Calu3 (cell line): ENCODE measurements at regions of chr7 and their contacts with region 1.

Region 1: GRCh38 chr7:143248761-143249354 is 14.4 kb upstream of the GSTK1 start:
- DNase-seq: peak; percentile 46
- H3K4me3 Mint-ChIP-seq: no peak overlapping the region
- H3K27ac Mint-ChIP-seq: peak overlapping the region; percentile 37
- H3K4me1 Mint-ChIP-seq: peaks cover 54% of the 10 kb centered on the region
- H3K27me3 Mint-ChIP-seq: no peaks in the 10 kb centered on the region
- CTCF ChIP-seq: no peak

Region 2: GRCh38 chr7:141649137-141649864 is 1599.6 kb before region 1 on chr7:
- CTCF ChIA-PET with region 1: no interaction called
- intact Hi-C with region 1: no loop called
- DNase-seq: no peak
- H3K4me3 Mint-ChIP-seq: no peak overlapping the region
- H3K27ac Mint-ChIP-seq: no peak overlapping the region
- H3K4me1 Mint-ChIP-seq: peaks cover 7% of the 10 kb centered on the region
- H3K27me3 Mint-ChIP-seq: no peaks in the 10 kb centered on the region
- CTCF ChIP-seq: no peak

Region 3: GRCh38 chr7:142319970-142320369 is 928.9 kb before region 1 on chr7:
- CTCF ChIA-PET with region 1: no interaction called
- intact Hi-C with region 1: no loop called
- DNase-seq: peak; percentile 40
- H3K4me3 Mint-ChIP-seq: no peak overlapping the region
- H3K27ac Mint-ChIP-seq: no peak overlapping the region
- H3K4me1 Mint-ChIP-seq: no peaks in the 10 kb centered on the region
- H3K27me3 Mint-ChIP-seq: peaks cover 59% of the 10 kb centered on the region
- CTCF ChIP-seq: peak; percentile 45

Region 4: GRCh38 chr7:143085109-143085508 is 163.7 kb before region 1 on chr7:
- CTCF ChIA-PET with region 1: no interaction called
- intact Hi-C with region 1: no loop called
- DNase-seq: no peak
- H3K4me3 Mint-ChIP-seq: no peak overlapping the region
- H3K27ac Mint-ChIP-seq: no peak overlapping the region
- H3K4me1 Mint-ChIP-seq: no peaks in the 10 kb centered on the region
- H3K27me3 Mint-ChIP-seq: peaks cover 42% of the 10 kb centered on the region
- CTCF ChIP-seq: no peak

Region 5: DNA sequence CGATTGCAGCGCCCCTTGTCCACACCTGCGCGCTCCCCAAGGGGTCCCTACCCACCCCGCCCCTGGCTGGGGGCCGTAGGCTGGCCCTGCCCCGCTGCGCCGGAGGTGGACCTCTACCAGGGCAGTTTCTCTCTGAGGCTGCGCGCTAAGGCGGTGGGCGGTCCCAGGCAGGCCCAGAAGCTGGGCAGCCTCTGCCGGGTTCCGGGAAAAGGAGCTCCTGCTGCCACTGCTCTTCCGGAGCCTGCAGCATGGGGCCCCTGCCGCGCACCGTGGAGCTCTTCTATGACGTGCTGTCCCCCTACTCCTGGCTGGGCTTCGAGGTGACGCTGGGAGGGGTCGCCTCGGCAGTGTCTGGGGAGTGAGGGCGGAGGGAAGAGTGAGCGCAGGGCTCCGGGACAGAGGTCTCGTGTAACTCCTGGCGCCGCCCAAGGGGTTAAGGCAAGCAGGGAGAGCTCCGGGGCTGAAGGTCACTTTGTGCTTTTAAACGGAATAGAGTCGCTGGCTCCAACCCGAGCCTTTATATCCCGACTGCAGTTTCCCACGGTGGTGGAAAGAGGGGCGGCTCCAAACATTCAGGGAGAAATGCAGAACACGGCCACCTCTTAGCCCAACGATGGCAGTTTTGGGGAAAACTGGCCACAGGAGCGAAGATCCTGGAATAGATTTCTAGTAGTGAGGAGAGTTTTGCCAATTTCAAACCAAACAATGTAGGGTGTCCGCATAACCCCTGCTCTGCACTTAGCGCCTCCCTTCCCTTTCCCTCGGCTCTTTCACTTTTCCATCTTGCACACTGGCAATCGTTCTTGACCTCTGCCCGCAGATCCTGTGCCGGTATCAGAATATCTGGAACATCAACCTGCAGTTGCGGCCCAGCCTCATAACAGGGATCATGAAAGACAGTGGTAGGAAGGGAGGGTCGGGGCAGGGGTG is 14.7 kb after region 1 on chr7 and contains the start of gene GSTK1:
- CTCF ChIA-PET with region 1: interaction called, 3 read pairs
- intact Hi-C with region 1: loop called (anchors 2 kb)
- DNase-seq: peak; percentile 81
- H3K4me3 Mint-ChIP-seq: peak within 1 kb of the TSS; percentile 97
- H3K27ac Mint-ChIP-seq: peak within 1 kb of the TSS; percentile 78
- H3K4me1 Mint-ChIP-seq: peaks cover 30% of the 10 kb centered on the region
- H3K27me3 Mint-ChIP-seq: no peaks in the 10 kb centered on the region
- CTCF ChIP-seq: no peak
- total RNA-seq, gene GSTK1: 109 and 116 TPM in 2 replicates